ENCODE measurements at regions of chr4 and their contacts with region 1.

Region 1: GRCh38 chr4:25234390-25235370 is 847 bp downstream of the PI4K2B start:
- DNase-seq: peak; percentile 60
- ATAC-seq: peak; percentile 45
- H3K4me3 Mint-ChIP-seq: peak overlapping the region; percentile 86
- H3K27ac Mint-ChIP-seq: peak overlapping the region; percentile 93
- H3K4me1 Mint-ChIP-seq: peaks cover 48% of the 10 kb centered on the region
- H3K27me3 Mint-ChIP-seq: no peaks in the 10 kb centered on the region

Region 2: DNA sequence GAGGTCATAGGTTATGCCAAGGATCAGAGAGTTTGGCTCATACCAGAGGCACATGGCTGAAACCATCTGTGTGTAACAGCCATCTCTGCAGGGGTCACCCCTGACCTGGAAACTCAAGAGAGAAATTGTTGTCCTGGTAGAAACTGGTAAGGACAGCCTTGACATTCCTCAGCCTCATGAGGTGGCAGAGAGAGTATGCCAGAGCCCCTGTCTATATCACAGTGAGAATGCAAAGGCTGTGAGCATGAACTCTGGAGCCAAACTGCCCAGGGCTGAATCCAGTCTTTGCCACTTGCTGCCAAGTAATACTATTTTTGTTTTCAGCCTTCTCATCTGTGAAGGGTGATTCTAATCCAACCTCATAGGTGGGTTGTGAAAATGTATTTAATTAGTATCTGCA is 284.7 kb before region 1 on chr4:
- CTCF ChIA-PET with region 1: no interaction called
- POLR2A ChIA-PET with region 1: no interaction called
- DNase-seq: no peak
- ATAC-seq: no peak
- H3K4me3 Mint-ChIP-seq: no peak overlapping the region
- H3K27ac Mint-ChIP-seq: no peak overlapping the region
- H3K4me1 Mint-ChIP-seq: no peaks in the 10 kb centered on the region
- H3K27me3 Mint-ChIP-seq: no peaks in the 10 kb centered on the region

Region 3: GRCh38 chr4:25297528-25298242 is 63.0 kb after region 1 on chr4:
- CTCF ChIA-PET with region 1: no interaction called
- POLR2A ChIA-PET with region 1: no interaction called
- DNase-seq: no peak
- ATAC-seq: no peak
- H3K4me3 Mint-ChIP-seq: no peak overlapping the region
- H3K27ac Mint-ChIP-seq: no peak overlapping the region
- H3K4me1 Mint-ChIP-seq: no peaks in the 10 kb centered on the region
- H3K27me3 Mint-ChIP-seq: peaks cover 20% of the 10 kb centered on the region

Region 4: GRCh38 chr4:25376754-25377571 is 142.3 kb after region 1 on chr4 and contains the start of gene ANAPC4:
- CTCF ChIA-PET with region 1: interaction called, 4 read pairs
- POLR2A ChIA-PET with region 1: interaction called, 10 read pairs
- DNase-seq: peak; percentile 99
- ATAC-seq: peak; percentile 96
- H3K4me3 Mint-ChIP-seq: no peak within 1 kb of the TSS
- H3K27ac Mint-ChIP-seq: peak within 1 kb of the TSS; percentile 91
- H3K4me1 Mint-ChIP-seq: peaks cover 15% of the 10 kb centered on the region
- H3K27me3 Mint-ChIP-seq: no peaks in the 10 kb centered on the region
- total RNA-seq, gene ANAPC4: 45.4 to 48.6 TPM

Region 5: GRCh38 chr4:25484243-25484721 is 249.6 kb after region 1 on chr4:
- CTCF ChIA-PET with region 1: no interaction called
- POLR2A ChIA-PET with region 1: no interaction called
- DNase-seq: no peak
- ATAC-seq: no peak
- H3K4me3 Mint-ChIP-seq: no peak overlapping the region
- H3K27ac Mint-ChIP-seq: no peak overlapping the region
- H3K4me1 Mint-ChIP-seq: no peaks in the 10 kb centered on the region
- H3K27me3 Mint-ChIP-seq: peaks cover 6% of the 10 kb centered on the region